Vagina (tissue), 2 donors: ENCODE measurements at regions of chr4 and their contacts with region 1.

Region 1: GRCh38 chr4:147594107-147594506 is 23.1 kb upstream of the TMEM184C start:
- DNase-seq: no peak
- H3K4me3 ChIP-seq: no peak overlapping the region
- H3K27ac ChIP-seq: no peak overlapping the region
- H3K4me1 ChIP-seq: no peaks in the 10 kb centered on the region
- H3K27me3 ChIP-seq: no peaks in the 10 kb centered on the region
- CTCF ChIP-seq: no peak
- POLR2A ChIP-seq: no peak

Region 2: GRCh38 chr4:147157860-147158701 is 436.0 kb before region 1 on chr4:
- intact Hi-C with region 1: loop called (anchors 2 kb)
- DNase-seq: no peak
- H3K4me3 ChIP-seq: peak overlapping the region; percentile 39 to 49
- H3K27ac ChIP-seq: peak overlapping the region; percentile 75
- H3K4me1 ChIP-seq: peaks cover 11% of the 10 kb centered on the region
- H3K27me3 ChIP-seq: no peaks in the 10 kb centered on the region
- CTCF ChIP-seq: no peak
- POLR2A ChIP-seq: no peak

Region 3: DNA sequence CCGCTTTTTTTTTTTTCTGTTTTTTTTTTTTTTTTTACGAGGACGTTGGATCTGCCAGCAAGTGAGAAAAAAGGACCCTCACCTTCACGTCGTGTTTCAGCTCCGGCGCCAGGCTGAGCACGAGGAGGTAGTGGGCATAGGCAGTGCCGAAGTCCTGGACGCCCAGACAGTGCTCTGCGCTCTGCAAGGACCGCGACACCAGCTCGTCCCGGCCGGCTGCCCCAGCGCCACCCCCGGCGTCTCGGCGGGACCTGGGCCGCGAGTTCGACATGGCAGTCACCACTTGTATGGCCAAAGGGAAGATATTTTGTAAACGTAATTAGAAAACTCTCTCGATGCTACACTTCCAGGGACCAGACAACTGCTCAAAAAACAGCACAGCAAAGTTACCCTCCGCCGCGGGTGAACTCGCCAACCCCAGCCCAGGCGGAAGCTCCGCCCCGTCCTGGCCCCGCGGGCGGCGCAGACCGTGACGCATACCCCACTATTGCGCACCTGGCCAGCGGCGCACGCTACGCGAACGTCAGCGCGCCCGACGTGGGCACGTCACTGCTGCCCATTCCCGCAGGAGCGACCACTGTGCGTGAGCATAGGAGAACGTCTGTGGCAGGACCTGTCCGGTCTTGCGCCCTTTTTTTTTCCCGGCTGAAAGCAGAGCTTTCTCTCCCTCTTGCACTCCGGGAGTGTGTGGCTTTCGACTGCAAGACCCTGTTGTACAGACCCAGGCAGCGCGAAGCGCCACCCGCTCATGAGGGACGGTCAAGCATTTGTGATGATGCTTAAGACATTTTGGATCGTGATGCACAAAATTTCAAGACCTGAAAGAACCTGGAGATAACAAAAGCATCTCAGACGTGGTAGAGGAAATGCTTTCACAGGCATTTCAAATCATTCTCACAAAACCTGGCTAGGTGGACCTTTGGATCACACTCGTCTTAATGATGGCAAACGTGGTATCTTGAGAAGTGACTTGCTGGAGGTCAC is 89.9 kb after region 1 on chr4 and contains the start of gene PRMT9:
- intact Hi-C with region 1: no loop called
- DNase-seq: peak in 1 of 2 donors; percentile 91
- H3K4me3 ChIP-seq: peak within 1 kb of the TSS; percentile 60 to 72
- H3K27ac ChIP-seq: peak within 1 kb of the TSS; percentile 92
- H3K4me1 ChIP-seq: peaks cover 11% of the 10 kb centered on the region
- H3K27me3 ChIP-seq: no peaks in the 10 kb centered on the region
- CTCF ChIP-seq: no peak
- POLR2A ChIP-seq: peak in 1 of 2 donors; percentile 86
- total RNA-seq, gene PRMT9: 6.9 TPM